K562 (cell line): ENCODE measurements at regions of chr20 and their contacts with region 1.

Region 1: DNA sequence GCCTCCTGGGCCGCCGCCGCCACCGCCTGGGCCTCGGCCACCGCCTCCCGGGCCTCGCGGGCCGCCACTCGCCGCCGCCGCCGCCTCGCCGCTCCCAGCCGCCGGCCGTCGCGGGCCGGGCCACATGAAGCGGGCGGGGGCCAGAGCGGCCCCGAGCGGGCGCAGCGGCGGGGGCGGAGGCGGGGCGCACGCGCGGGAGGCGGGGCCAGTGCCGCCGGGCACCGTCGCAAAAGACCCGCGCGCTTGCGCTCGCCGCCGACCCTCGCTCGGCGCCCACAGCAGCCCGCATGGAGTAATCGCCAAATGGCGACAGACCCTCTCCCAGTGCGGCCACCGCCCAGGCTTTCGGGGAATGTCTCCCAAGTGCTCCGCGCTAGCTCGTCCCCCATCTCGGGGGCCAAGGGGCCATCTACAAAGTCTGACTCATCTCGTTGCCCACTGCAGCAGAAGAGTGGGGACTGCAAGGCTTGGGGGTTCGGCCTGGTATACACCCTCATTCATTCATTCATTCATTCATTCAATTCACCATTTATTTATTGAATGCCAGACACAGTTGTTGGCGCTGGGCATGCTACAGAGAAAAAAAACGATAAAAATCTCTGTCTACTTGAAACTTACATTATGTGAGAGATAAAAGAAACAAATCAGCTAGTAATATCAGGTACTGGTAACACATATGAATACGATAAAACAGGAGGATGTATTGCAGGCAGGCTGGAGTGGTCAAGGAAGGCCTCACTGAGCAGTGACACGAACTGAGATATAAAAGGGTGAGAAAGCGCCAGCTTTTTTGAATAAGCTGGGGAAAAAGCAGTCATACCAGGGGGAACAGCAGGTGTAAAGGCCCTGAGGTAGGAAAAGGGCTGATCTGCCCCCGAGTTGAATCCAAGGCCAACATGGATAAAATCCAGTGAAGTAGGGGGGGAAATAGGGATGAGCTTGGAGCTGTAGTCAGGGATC is at the start of gene B4GALT5:
- DNase-seq: peak; percentile 87 to 94 (median 90)
- ATAC-seq: peak; percentile 86
- H3K4me3 ChIP-seq: peak within 1 kb of the TSS; percentile 78
- H3K27ac ChIP-seq: peak within 1 kb of the TSS; percentile 86
- H3K4me1 ChIP-seq: peaks cover 18 to 21% of the 10 kb centered on the region in 2 experiments; a peak in 3 of 5 replicates
- H3K27me3 ChIP-seq: no peaks in the 10 kb centered on the region
- CTCF ChIP-seq: no peak
- EP300 ChIP-seq: 0 out of 2 replicates have a peak, but pooled peaks have one; percentile 6
- POLR2A ChIP-seq: 0 out of 2 replicates have a peak, but pooled peaks have one; percentile 28
- RAD21 ChIP-seq: no peak
- polyA plus RNA-seq, gene B4GALT5: 12.2 to 17.5 TPM

Region 2: GRCh38 chr20:48247966-48248365 is 1466.1 kb before region 1 on chr20:
- CTCF ChIA-PET with region 1: no interaction called
- POLR2A ChIA-PET with region 1: no interaction called
- in situ Hi-C with region 1: no loop called
- intact Hi-C with region 1: no loop called
- DNase-seq: no peak
- ATAC-seq: no peak
- H3K4me3 ChIP-seq: no peak overlapping the region
- H3K27ac ChIP-seq: no peak overlapping the region
- H3K4me1 ChIP-seq: no peaks in the 10 kb centered on the region
- H3K27me3 ChIP-seq: peaks cover 0 to 2% of the 10 kb centered on the region in 2 experiments; a peak in 2 of 5 replicates
- CTCF ChIP-seq: no peak
- EP300 ChIP-seq: no peak
- POLR2A ChIP-seq: no peak
- RAD21 ChIP-seq: no peak

Region 3: DNA sequence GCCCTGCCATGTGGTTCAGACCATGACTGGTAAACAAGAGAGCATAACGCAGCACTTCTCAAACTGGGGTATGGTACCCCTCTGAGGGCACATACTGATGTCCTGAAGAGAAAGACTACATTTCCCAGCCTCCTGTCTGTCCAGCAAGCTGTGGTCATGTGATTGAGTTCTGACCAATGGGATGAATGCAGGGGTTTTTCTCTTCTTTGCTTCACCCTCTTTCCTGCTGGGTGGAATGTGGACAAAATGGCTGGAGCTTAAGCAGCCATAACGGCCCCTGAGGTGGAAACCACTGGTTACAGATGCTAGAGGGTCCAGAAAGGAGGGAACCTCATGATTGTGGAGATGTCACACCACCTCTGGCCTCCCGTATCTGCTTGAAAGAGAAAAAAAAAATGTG is 212.1 kb before region 1 on chr20:
- CTCF ChIA-PET with region 1: no interaction called
- POLR2A ChIA-PET with region 1: no interaction called
- in situ Hi-C with region 1: no loop called
- intact Hi-C with region 1: no loop called
- DNase-seq: peak; percentile 37 to 54 (median 42)
- ATAC-seq: peak; percentile 86
- H3K4me3 ChIP-seq: no peak overlapping the region
- H3K27ac ChIP-seq: no peak overlapping the region
- H3K4me1 ChIP-seq: no peaks in the 10 kb centered on the region
- H3K27me3 ChIP-seq: peaks cover 6 to 13% of the 10 kb centered on the region in 2 experiments; a peak in 4 of 5 replicates
- CTCF ChIP-seq: no peak
- EP300 ChIP-seq: no peak
- POLR2A ChIP-seq: no peak
- RAD21 ChIP-seq: no peak

Region 4: DNA sequence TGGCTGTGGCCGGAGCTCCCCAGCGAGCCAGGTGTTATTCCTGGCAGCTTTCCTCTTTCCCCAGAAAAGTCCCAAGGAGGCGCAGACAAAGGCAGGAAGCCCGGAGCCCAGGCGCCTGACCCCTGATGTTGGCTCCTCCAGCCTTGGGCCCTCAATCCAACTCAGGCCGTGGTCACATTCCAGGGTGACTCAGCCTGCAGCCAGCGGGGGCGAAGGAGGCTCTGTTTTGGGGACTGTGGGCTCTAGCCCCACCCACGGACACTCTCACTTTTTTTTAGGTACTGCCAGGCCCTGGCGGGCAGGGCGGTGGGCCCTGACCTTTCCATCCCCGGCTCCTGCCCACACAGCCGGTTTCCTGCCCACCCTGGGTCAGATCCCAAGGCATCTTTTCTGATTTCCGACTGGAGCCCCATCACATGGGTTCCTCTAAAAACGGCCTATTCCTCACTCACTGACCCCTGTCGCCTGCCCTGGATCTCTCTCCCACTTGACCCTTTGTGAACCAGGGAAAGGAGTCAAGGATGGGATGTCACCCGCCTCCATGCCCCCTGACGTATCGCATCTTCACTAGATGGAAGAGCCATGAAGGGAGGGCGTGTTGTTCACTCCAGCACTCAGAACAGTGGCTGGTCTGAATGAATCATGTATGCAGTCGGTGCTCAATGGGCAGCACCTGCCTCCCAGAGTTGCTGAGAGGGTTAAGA is 151.6 kb before region 1 on chr20:
- CTCF ChIA-PET with region 1: no interaction called
- POLR2A ChIA-PET with region 1: no interaction called
- in situ Hi-C with region 1: no loop called
- intact Hi-C with region 1: no loop called
- DNase-seq: peak; percentile 34 to 46 (median 44)
- ATAC-seq: peak; percentile 53; the same call in 2 of the 3 replicates
- H3K4me3 ChIP-seq: no peak overlapping the region
- H3K27ac ChIP-seq: no peak overlapping the region
- H3K4me1 ChIP-seq: peaks cover 4 to 7% of the 10 kb centered on the region in 2 experiments
- H3K27me3 ChIP-seq: peaks cover 14 to 50% of the 10 kb centered on the region in 2 experiments; a peak in 3 of 5 replicates
- CTCF ChIP-seq: no peak
- EP300 ChIP-seq: no peak
- POLR2A ChIP-seq: no peak
- RAD21 ChIP-seq: no peak

Region 5: GRCh38 chr20:49594143-49594930 is 119.7 kb before region 1 on chr20:
- CTCF ChIA-PET with region 1: no interaction called
- POLR2A ChIA-PET with region 1: no interaction called
- in situ Hi-C with region 1: no loop called
- intact Hi-C with region 1: no loop called
- DNase-seq: no peak
- ATAC-seq: no peak
- H3K4me3 ChIP-seq: no peak overlapping the region
- H3K27ac ChIP-seq: no peak overlapping the region
- H3K4me1 ChIP-seq: 0 out of 5 replicates have a peak, but pooled peaks cover 0 to 3% of the 10 kb centered on the region in 2 experiments
- H3K27me3 ChIP-seq: peaks cover 34 to 50% of the 10 kb centered on the region in 2 experiments
- CTCF ChIP-seq: no peak
- EP300 ChIP-seq: no peak
- POLR2A ChIP-seq: no peak
- RAD21 ChIP-seq: no peak

Region 6: GRCh38 chr20:49812463-49813304 is 98.7 kb after region 1 on chr20 and contains the start of gene SLC9A8:
- CTCF ChIA-PET with region 1: no interaction called
- POLR2A ChIA-PET with region 1: interaction called, 3 read pairs
- in situ Hi-C with region 1: no loop called
- intact Hi-C with region 1: loop called (anchors 10 kb)
- DNase-seq: peak; percentile 91 to 96 (median 94)
- ATAC-seq: peak; percentile 98
- H3K4me3 ChIP-seq: peak within 1 kb of the TSS; percentile 65
- H3K27ac ChIP-seq: peak within 1 kb of the TSS; percentile 91
- H3K4me1 ChIP-seq: peaks cover 13 to 23% of the 10 kb centered on the region in 2 experiments; a peak in 4 of 5 replicates
- H3K27me3 ChIP-seq: no peaks in the 10 kb centered on the region
- CTCF ChIP-seq: peak; percentile 38 to 53 (median 43); a peak in 5 of 6 replicates
- EP300 ChIP-seq: peak; percentile 53; the same call in 1 of the 2 replicates
- POLR2A ChIP-seq: peak; percentile 77
- RAD21 ChIP-seq: peak; percentile 8 to 25; a peak in 3 of 4 replicates
- polyA plus RNA-seq, gene SLC9A8: 0.56 to 0.76 TPM